ENCODE measurements at regions of chr19 and their contacts with region 1.

Region 1: DNA sequence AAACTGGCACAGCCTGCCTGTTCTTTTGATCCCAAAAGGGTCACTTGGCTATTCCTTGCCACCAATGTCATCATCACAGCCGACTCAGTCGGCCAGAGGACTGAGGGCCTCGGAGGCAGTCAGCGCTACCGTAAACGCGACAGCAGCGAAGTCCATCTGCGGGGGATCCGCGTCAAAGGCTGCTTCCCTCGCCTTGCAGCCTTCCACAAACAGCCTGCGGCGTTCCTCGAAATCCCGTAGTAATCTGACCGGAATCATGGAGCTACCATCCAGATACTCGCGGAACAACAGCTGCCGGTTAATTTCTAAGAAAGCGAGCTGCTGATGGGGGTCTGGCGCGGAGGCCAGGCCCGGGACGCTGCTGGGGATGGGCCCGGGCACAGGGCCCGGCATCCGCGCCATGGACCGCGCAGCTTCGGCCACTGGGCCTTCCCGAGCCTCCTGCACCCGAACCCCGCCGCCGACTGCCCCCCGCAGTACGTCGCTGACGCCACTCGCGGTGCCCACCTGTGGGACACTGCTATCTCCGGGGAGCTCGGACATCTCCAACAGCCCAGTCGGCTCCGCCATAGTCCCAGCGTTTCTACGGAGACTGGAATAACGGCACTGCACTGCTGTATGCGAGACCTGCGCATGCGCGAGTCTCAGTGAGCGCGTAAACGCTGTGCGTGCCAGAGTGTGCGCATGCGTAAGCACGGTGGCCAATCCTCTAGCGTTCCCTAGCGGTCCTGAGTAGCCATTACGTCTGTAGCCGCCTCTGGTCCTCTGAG is at the start of gene EID2B:
- DNase-seq: peak; percentile 95
- ATAC-seq: peak; percentile 94
- H3K4me3 Mint-ChIP-seq: peak within 1 kb of the TSS; percentile 91
- H3K27ac Mint-ChIP-seq: no peak within 1 kb of the TSS
- H3K4me1 Mint-ChIP-seq: peaks cover 6% of the 10 kb centered on the region
- H3K27me3 Mint-ChIP-seq: peaks cover 10% of the 10 kb centered on the region
- CTCF ChIP-seq: peak; percentile 95
- total RNA-seq, gene EID2B: 2.7 to 3.6 TPM (median 2.7 TPM) in 3 replicates

Region 2: GRCh38 chr19:39480337-39481228 is 51.8 kb before region 1 on chr19 and contains the start of gene TIMM50:
- CTCF ChIA-PET with region 1: interaction called, 66 read pairs
- POLR2A ChIA-PET with region 1: interaction called, 4 read pairs
- DNase-seq: peak; percentile 100
- ATAC-seq: peak; percentile 96
- H3K4me3 Mint-ChIP-seq: peak within 1 kb of the TSS; percentile 91
- H3K27ac Mint-ChIP-seq: peak within 1 kb of the TSS; percentile 99
- H3K4me1 Mint-ChIP-seq: peaks cover 18% of the 10 kb centered on the region
- H3K27me3 Mint-ChIP-seq: no peaks in the 10 kb centered on the region
- CTCF ChIP-seq: no peak
- total RNA-seq, gene TIMM50: 136 to 154 TPM (median 137 TPM) in 3 replicates

Region 3: DNA sequence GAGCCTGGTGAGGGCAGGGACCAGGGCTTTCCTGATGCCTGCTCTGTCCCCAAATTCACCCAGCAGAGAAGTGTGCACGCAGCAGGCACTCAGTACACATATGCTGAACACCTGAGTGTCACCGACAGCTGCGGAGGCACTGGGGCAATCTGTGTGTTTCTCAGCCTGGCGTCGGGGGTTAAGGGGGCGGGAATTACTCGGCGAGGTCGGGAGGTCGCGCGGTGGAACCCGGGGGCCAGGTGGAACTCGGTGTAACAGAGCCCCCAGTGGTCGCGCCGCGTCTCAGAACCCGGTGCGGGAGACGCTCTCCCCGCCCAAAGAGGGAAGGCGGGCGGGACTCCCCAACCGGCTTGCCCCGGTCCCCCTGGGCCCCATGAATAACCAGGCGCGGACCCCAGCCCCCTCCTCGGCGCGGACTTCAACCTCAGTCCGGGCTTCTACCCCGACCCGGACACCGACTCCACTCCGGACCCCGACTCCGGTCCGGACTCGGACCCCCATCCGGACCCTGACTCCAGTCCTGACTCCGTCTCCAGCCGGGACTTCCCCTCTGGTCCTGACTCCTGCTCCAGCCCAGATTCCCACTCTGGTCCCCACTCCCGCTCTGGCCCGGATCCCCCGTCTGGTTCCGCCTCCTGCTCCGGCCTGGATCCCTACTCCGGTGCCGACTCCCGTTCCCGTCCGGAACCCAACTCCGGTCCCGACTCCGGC is 17.4 kb before region 1 on chr19 and contains the start of gene SELENOV:
- CTCF ChIA-PET with region 1: interaction called, 21 read pairs
- POLR2A ChIA-PET with region 1: interaction called, 6 read pairs
- DNase-seq: peak; percentile 90
- ATAC-seq: peak; percentile 76
- H3K4me3 Mint-ChIP-seq: peak within 1 kb of the TSS; percentile 89
- H3K27ac Mint-ChIP-seq: peak within 1 kb of the TSS; percentile 41; the same call in 1 of the 2 replicates
- H3K4me1 Mint-ChIP-seq: peaks cover 27% of the 10 kb centered on the region
- H3K27me3 Mint-ChIP-seq: peaks cover 36% of the 10 kb centered on the region
- CTCF ChIP-seq: no peak
- total RNA-seq, gene SELENOV: 12.6 to 15.4 TPM (median 15.1 TPM) in 3 replicates